ENCODE measurements at regions of chr17 and their contacts with region 1.

Region 1: DNA sequence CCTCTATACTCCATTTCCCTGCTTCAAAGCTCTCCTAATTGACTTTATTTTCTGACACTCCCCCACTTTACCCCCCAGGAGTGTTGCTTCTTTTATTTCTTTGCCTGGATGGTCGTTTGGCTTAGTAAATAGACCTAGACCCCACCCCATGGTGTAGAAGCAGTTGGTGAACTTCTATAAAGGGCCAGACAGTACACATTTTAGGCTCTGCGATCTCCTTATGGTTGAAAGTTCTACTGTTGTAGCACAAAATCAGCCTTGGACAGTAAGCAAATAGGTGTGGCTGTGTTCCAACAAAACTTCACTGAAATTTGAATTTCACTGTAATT is 31.9 kb downstream of the ZNF287 start:
- DNase-seq: no peak
- H3K4me3 Mint-ChIP-seq: peak overlapping the region; percentile 97
- H3K27ac Mint-ChIP-seq: peak overlapping the region; percentile 97
- H3K4me1 Mint-ChIP-seq: peaks cover 19% of the 10 kb centered on the region
- H3K27me3 Mint-ChIP-seq: peaks cover 3% of the 10 kb centered on the region

Region 2: DNA sequence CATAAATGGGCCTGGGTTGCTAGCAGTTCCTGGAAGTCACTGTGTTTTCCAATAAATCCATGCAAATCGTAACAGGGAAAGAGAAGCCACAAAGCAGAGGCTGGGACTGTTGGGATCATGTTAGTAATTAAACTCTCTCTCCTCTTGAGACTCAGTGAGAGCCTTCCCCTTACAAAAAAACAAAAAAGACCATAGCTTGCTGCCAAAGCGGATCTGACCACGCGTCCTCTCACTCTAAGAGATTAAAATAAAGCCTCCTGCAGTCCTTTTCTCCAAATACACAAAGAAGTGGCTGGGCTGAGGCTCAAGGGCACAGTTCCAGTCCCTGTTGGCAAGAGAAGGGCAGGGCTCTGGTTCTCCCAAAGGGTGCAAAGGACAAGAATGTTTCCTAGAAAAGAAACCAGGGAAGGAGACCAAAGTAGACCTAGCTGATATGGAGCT is 281.6 kb before region 1 on chr17:
- CTCF ChIA-PET with region 1: no interaction called
- POLR2A ChIA-PET with region 1: no interaction called
- DNase-seq: no peak
- H3K4me3 Mint-ChIP-seq: no peak overlapping the region
- H3K27ac Mint-ChIP-seq: no peak overlapping the region
- H3K4me1 Mint-ChIP-seq: peaks cover 12% of the 10 kb centered on the region
- H3K27me3 Mint-ChIP-seq: no peaks in the 10 kb centered on the region

Region 3: GRCh38 chr17:16371742-16372141 is 165.4 kb before region 1 on chr17:
- CTCF ChIA-PET with region 1: no interaction called
- POLR2A ChIA-PET with region 1: no interaction called
- DNase-seq: no peak
- H3K4me3 Mint-ChIP-seq: no peak overlapping the region
- H3K27ac Mint-ChIP-seq: no peak overlapping the region
- H3K4me1 Mint-ChIP-seq: no peaks in the 10 kb centered on the region
- H3K27me3 Mint-ChIP-seq: no peaks in the 10 kb centered on the region

Region 4: GRCh38 chr17:16438557-16439302 is 98.4 kb before region 1 on chr17:
- CTCF ChIA-PET with region 1: interaction called, 9 read pairs
- POLR2A ChIA-PET with region 1: interaction called, 12 read pairs
- DNase-seq: peak; percentile 95
- H3K4me3 Mint-ChIP-seq: peak overlapping the region; percentile 98
- H3K27ac Mint-ChIP-seq: peak overlapping the region; percentile 97
- H3K4me1 Mint-ChIP-seq: peaks cover 47% of the 10 kb centered on the region
- H3K27me3 Mint-ChIP-seq: no peaks in the 10 kb centered on the region

Region 5: GRCh38 chr17:16521070-16521727 is 15.9 kb before region 1 on chr17:
- CTCF ChIA-PET with region 1: interaction called, 18 read pairs
- POLR2A ChIA-PET with region 1: no interaction called
- DNase-seq: peak; percentile 69
- H3K4me3 Mint-ChIP-seq: no peak overlapping the region
- H3K27ac Mint-ChIP-seq: no peak overlapping the region
- H3K4me1 Mint-ChIP-seq: peaks cover 4% of the 10 kb centered on the region
- H3K27me3 Mint-ChIP-seq: peaks cover 29% of the 10 kb centered on the region

Region 6: DNA sequence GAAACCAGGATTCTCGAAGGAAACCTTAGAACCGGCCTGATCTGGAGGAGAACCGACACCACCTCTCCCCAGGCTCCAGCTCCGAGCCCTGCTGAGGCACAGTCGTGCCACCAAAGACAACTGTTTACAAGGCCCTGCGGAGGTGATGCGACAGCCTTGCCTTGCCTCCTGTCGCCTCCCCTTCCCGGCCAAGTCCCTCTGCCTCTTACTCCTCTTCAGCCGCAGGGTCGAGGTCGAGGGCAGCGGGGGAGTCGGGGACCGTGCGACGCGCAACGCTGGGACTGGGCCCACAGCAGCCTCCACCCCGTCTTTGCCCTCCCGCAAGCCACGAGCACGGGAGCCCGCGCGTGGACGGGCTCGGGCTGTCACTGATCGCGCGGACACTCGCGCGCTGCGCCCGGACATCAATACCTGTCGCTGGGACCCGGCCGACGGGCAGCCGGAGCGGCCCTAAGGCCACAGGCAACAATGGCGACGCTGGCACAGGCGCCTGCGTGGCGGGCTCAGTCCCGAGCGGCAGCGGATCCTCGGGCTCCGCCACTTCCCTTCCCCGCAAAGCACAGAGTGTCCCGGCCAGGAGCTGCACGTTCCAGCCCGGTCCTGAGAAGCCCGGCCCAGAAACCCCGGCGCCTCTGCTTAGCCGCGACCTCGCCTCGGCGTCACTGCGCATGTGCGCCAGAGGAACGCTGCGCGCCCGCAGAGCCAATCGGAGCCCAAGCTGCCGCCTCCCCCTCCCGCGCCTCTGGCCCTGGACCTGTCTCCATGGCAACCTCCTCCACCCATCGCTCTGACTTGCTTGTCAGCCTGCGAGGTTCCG is 31.7 kb after region 1 on chr17 and contains the start of gene ZNF287:
- CTCF ChIA-PET with region 1: interaction called, 7 read pairs
- POLR2A ChIA-PET with region 1: interaction called, 10 read pairs
- DNase-seq: peak; percentile 90
- H3K4me3 Mint-ChIP-seq: peak within 1 kb of the TSS; percentile 81
- H3K27ac Mint-ChIP-seq: no peak within 1 kb of the TSS
- H3K4me1 Mint-ChIP-seq: peaks cover 19% of the 10 kb centered on the region
- H3K27me3 Mint-ChIP-seq: peaks cover 2% of the 10 kb centered on the region
- total RNA-seq, gene ZNF287: 7.4 TPM

Region 7: GRCh38 chr17:16589097-16589969 is 52.2 kb after region 1 on chr17:
- CTCF ChIA-PET with region 1: interaction called, 34 read pairs
- POLR2A ChIA-PET with region 1: interaction called, 15 read pairs
- DNase-seq: peak; percentile 92
- H3K4me3 Mint-ChIP-seq: peak overlapping the region; percentile 65
- H3K27ac Mint-ChIP-seq: no peak overlapping the region
- H3K4me1 Mint-ChIP-seq: peaks cover 7% of the 10 kb centered on the region
- H3K27me3 Mint-ChIP-seq: peaks cover 32% of the 10 kb centered on the region